ENCODE measurements at regions of chr4 and their contacts with region 1.

Region 1: GRCh38 chr4:86921608-86922252 is 13.1 kb upstream of the AFF1 start:
- H3K4me3 Mint-ChIP-seq: no peak overlapping the region
- H3K27ac Mint-ChIP-seq: peak overlapping the region; percentile 90
- H3K4me1 Mint-ChIP-seq: peaks cover 64% of the 10 kb centered on the region
- H3K27me3 Mint-ChIP-seq: no peaks in the 10 kb centered on the region

Region 2: DNA sequence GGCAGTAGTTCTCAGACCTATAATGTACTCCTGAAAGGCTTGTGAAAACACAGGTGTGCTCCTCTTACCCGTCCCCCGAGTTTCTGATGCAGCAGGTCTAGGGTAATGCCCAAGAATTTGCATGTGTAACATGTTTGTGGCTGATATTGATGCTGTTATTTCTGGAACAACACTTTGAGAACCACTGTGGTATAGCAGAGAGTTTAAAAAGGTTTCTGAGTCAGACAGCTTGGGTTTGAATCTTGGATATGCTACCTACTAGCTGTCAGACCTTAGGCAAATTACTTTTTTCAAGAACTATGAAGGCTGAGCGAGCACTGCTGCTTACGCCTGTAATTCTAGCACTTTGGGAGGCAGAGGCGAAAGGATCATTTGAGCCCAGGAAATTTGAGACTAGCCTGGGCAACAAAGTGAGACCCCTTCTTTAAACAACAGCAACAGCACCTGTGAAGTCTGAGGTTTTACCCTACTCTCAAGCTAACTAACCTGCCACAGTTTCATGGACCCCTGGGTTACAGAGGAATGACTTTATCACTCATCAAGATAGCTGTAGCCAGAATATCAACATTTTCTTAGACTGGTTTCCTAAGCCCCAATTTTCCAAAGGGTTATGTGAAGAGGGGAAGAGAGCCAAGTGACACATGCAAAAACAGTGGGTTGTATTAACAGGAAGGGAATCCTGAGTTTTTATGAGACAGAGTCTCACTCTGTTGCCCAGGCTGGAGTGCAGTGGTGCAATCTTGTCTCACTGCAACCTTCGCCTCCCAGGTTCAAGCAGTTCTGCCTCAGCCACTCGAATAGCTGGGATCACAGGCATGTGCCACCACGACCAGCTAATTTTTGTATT is 18.2 kb after region 1 on chr4:
- intact Hi-C with region 1: no loop called
- H3K4me3 Mint-ChIP-seq: no peak overlapping the region
- H3K27ac Mint-ChIP-seq: peak overlapping the region; percentile 52
- H3K4me1 Mint-ChIP-seq: peaks cover 57% of the 10 kb centered on the region
- H3K27me3 Mint-ChIP-seq: no peaks in the 10 kb centered on the region

Region 3: GRCh38 chr4:87093443-87094123 is 171.9 kb after region 1 on chr4:
- intact Hi-C with region 1: loop called (anchors 1 kb)
- H3K4me3 Mint-ChIP-seq: no peak overlapping the region
- H3K27ac Mint-ChIP-seq: peak overlapping the region; percentile 44
- H3K4me1 Mint-ChIP-seq: peaks cover 52% of the 10 kb centered on the region
- H3K27me3 Mint-ChIP-seq: no peaks in the 10 kb centered on the region